Brain microvascular endothelial cell (primary cell): ENCODE measurements at regions of chr4 and their contacts with region 1.

Region 1: DNA sequence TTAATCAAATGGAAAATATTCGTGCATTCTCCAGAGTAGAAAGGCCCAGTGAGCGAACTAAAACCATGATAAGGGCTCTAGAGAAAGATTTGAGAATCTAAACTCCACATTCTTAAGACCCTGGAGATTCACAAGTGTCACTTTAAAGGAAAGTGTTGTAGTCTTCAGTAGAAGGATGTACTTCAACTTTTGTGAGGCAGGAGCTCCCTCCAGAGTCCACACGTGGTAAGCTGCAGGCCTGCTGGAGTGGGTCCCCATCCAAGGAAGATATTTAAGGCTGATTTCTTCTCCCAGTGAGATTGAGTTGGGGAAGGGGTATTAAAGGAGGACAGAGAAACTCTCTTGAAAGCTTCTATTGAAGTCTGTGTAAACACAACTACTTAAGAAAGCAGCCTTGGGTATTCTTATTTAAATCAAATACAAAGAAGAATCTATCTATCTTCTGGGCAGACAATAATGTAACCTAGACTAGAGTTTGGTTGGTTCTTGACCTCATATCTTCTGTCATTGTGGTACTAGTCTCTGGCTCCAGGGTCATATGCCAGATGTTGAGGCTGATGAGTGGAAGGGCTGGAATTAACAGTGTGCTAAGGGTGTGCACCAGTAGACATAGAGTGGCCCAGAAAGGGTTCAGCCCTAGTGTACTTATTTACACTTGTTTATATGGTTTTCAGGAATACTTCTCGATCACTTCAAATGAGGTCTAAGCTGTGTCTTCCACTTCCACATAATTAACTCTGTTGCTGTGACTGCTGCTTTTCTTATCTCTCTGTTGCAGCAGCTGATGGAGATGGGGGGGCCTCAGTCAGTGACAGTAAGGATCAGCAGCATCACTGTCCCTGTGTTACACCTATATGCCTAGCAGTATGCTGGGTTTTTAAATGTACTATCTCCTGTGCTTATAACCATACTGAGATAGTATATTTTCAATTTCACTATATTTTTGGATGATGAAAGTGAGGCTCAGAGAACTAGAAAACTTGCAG is 76.1 kb downstream of the HMGB2 start:
- DNase-seq: peak; percentile 65
- H3K4me3 ChIP-seq: no peak overlapping the region
- H3K27ac ChIP-seq: no peak overlapping the region
- H3K27me3 ChIP-seq: no peaks in the 10 kb centered on the region
- CTCF ChIP-seq: peak; percentile 90

Region 2: GRCh38 chr4:173013232-173013930 is 244.6 kb before region 1 on chr4:
- in situ Hi-C with region 1: loop called (anchors 25 kb)
- DNase-seq: peak; percentile 50
- H3K4me3 ChIP-seq: no peak overlapping the region
- H3K27ac ChIP-seq: no peak overlapping the region
- H3K27me3 ChIP-seq: no peaks in the 10 kb centered on the region
- CTCF ChIP-seq: peak; percentile 66

Region 3: GRCh38 chr4:173424899-173425805 is 167.1 kb after region 1 on chr4:
- in situ Hi-C with region 1: no loop called
- DNase-seq: peak; percentile 76
- H3K4me3 ChIP-seq: no peak overlapping the region
- H3K27ac ChIP-seq: peak overlapping the region; percentile 61
- H3K27me3 ChIP-seq: no peaks in the 10 kb centered on the region
- CTCF ChIP-seq: no peak